Activated CD4-positive, alpha-beta T cell treated with anti-CD3 and anti-CD28 coated beads, Interleukin-2, amount 10 ng/mL, durations not matched to agents 24 days and 14 days (primary cell): ENCODE measurements at regions of chr15 and their contacts with region 1.

Region 1: DNA sequence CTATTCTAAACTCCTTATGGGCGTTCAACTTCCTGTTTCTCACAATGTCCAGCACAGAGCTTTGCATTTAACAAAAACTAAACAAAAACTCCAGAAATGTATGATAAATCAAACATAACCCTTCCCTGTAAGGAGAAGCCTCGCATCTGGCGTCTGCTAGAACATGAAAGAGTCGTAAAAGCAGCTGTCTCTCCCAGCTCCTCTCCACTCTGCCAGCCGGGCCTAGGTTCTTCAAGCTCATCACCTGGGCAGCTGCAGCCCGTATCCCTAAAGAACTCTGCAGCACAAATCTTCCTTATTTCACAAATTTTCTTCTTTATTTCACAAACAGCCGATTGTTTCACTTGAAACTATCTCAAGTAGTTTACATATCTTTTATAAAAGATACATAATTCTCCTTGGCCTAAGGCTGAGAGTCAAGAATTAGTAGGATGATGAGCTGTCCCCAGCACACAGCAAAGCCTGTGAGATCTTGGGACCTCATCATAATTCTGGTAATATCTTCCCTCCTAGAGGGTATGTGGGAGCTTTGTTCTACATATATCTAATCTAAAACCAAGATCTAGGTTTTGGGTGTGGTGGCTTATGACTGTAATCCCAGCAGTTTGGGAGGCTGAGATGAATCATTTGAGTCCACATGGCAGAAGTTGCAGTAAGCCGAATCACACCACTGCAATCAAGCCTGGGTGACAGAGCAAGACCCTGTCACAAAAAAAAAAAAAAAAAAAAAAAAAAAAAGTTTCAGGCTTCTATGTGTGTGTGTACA is 35.3 kb downstream of the ANXA2 start:
- DNase-seq: peak; percentile 82
- H3K4me3 Mint-ChIP-seq: peak overlapping the region; percentile 41
- H3K27ac Mint-ChIP-seq: peak overlapping the region; percentile 80
- H3K4me1 Mint-ChIP-seq: peaks cover 34% of the 10 kb centered on the region
- H3K27me3 Mint-ChIP-seq: no peaks in the 10 kb centered on the region

Region 2: DNA sequence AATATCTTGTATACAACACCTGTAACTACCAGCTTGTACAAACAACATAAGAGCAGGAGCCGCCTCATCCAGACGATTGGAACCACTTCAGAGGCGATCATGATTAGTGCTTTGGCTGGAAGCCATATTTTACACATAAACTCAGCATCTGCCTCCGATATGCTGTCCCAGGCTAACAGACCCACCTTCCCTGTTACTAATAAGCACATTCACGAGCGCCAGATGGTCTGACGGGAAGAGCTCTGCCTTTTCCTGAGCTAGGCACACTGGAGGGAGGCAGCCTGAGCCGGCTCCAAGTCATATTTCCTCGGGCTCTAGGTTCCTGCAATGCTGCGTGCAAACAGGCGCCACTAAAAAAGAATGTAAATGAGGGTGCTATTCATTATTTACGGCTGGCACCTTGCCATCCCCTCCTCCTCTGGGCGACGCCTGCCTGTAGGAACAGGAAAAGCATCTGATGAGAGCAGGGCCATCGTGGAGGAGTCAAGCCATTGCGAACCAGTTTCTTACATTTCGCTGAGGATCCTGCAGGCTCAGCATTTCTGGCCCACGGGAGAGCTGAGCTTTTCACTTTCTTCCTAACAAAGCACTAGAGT is 63.0 kb before region 1 on chr15:
- intact Hi-C with region 1: no loop called
- DNase-seq: no peak
- H3K4me3 Mint-ChIP-seq: no peak overlapping the region
- H3K27ac Mint-ChIP-seq: no peak overlapping the region
- H3K4me1 Mint-ChIP-seq: no peaks in the 10 kb centered on the region
- H3K27me3 Mint-ChIP-seq: peaks cover 4% of the 10 kb centered on the region

Region 3: DNA sequence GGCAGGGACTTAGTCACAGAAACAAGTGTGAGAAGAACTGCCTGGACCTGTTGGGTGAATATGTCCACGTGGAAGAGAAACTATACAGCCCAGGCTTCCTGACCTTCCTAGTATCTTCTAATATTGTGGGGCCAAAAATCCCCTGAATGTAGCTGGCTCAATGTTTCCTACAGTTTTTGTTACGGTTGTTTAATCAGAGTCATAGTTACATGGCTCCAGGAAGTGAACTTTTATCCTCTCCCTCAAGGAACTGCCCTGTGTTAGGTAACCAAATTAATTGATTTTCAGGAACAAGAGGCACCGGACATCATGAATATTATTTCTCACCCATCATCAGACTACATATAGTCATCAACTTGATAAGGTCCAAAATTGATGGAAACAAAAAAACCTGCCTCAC is 23.7 kb before region 1 on chr15:
- intact Hi-C with region 1: no loop called
- DNase-seq: no peak
- H3K4me3 Mint-ChIP-seq: no peak overlapping the region
- H3K27ac Mint-ChIP-seq: no peak overlapping the region
- H3K4me1 Mint-ChIP-seq: peaks cover 6% of the 10 kb centered on the region
- H3K27me3 Mint-ChIP-seq: peaks cover 22% of the 10 kb centered on the region

Region 4: GRCh38 chr15:60374628-60375081 is 12.2 kb after region 1 on chr15:
- intact Hi-C with region 1: no loop called
- DNase-seq: no peak
- H3K4me3 Mint-ChIP-seq: no peak overlapping the region
- H3K27ac Mint-ChIP-seq: no peak overlapping the region
- H3K4me1 Mint-ChIP-seq: peaks cover 26% of the 10 kb centered on the region
- H3K27me3 Mint-ChIP-seq: no peaks in the 10 kb centered on the region

Region 5: DNA sequence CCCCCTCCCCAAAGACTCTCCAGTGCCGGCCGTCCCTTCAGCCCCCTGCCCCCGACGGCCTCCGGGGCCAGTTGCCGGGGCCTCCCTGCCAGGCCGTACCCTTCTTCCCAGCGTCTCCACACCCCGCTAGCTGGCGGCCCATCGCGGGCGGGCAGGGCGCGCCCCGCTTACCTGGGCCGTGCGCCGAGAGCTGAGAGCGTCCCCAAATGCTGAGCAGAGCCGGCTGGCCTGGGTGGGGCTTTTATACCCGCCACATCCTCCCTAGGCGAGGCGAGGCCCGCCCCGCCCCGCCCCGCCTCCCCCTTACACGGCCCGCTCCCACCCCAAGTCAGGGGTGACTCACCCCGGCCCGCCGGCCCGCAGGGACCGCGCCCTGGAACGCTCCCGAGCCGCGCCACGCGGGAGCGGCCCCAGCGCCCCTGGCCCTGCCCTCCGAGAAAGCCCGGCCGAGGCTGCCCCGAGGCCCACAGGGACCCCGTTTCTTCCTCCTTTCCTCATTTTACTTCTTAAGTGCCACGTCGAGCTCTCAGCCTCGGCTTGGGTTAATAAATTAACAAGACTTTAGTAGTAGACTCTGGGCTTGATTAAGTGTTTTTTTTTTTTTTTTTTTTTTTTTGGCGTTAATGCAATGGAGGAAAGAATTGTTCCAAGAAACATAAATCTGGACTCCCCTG is 35.4 kb after region 1 on chr15 and contains the start of gene ANXA2:
- intact Hi-C with region 1: loop called (anchors 1 kb)
- DNase-seq: peak; percentile 94
- H3K4me3 Mint-ChIP-seq: peak within 1 kb of the TSS; percentile 92
- H3K27ac Mint-ChIP-seq: peak within 1 kb of the TSS; percentile 94
- H3K4me1 Mint-ChIP-seq: peaks cover 51% of the 10 kb centered on the region
- H3K27me3 Mint-ChIP-seq: peaks cover 4% of the 10 kb centered on the region
- total RNA-seq, gene ANXA2: 214 and 225 TPM in 2 replicates

Region 6: DNA sequence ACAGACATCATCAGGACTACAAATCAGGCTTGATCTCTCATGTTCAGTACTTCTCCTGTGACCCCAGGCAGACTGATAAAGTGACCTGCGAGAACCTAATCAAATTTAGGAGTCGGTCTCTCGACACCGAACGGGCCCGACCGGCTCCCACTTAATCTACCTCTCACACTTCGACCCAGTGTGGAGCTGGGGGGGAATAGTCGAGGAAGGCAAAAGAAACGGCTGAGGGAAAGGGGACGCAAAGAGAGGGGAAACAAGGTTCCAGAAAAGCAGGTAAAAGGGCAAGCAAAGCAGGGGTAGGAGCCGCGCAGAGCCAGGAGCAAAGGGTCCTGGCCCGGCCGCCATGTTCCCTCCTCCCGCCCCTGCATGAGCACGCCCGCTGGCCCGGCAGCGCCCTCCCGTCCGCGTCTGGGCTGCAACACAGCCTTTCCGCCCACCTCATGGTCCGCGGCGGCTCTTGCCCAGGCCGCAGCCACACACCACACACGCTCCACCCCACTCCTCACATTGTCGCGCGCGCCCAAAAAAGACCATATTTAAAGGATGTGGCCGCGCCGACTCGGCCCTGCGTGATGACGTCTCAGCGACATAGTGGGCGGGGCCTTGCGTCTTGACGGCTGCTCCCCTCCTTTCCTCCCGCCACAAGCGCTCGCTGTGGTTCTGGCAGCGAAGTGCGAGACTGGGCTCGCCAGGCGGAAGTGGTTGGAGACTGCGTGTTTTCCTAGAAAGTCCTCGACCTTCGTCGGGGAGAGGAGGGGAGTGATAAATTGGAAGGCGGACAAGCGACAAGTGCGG is 116.3 kb after region 1 on chr15 and contains the start of gene ICE2:
- intact Hi-C with region 1: loop called (anchors 2 kb)
- DNase-seq: peak; percentile 99
- H3K4me3 Mint-ChIP-seq: peak within 1 kb of the TSS; percentile 95
- H3K27ac Mint-ChIP-seq: peak within 1 kb of the TSS; percentile 99
- H3K4me1 Mint-ChIP-seq: peaks cover 37% of the 10 kb centered on the region
- H3K27me3 Mint-ChIP-seq: no peaks in the 10 kb centered on the region
- total RNA-seq, gene ICE2: 55.4 and 62.6 TPM in 2 replicates

Region 7: GRCh38 chr15:60520825-60521368 is 158.4 kb after region 1 on chr15:
- intact Hi-C with region 1: loop called (anchors 1 kb)
- DNase-seq: peak; percentile 93
- H3K4me3 Mint-ChIP-seq: peak overlapping the region; percentile 8
- H3K27ac Mint-ChIP-seq: peak overlapping the region; percentile 59
- H3K4me1 Mint-ChIP-seq: peaks cover 36% of the 10 kb centered on the region
- H3K27me3 Mint-ChIP-seq: no peaks in the 10 kb centered on the region